Mammary epithelial cell (primary cell): ENCODE measurements at regions of chr4 and their contacts with region 1.

Region 1: GRCh38 chr4:151408630-151409469 is at the start of gene FHIP1A:
- DNase-seq: peak; percentile 95
- H3K4me3 ChIP-seq: peak within 1 kb of the TSS; percentile 82 to 97 (median 85)
- H3K27ac ChIP-seq: peak within 1 kb of the TSS; percentile 97
- H3K4me1 ChIP-seq: peaks cover 31% of the 10 kb centered on the region
- H3K27me3 ChIP-seq: no peaks in the 10 kb centered on the region
- CTCF ChIP-seq: peak in 1 of 2 donors; percentile 10
- total RNA-seq, gene FHIP1A: 33.0 to 38.5 TPM

Region 2: GRCh38 chr4:151468715-151469696 is 60.2 kb after region 1 on chr4:
- CTCF ChIA-PET with region 1: no interaction called
- dilution Hi-C with region 1: no loop called
- in situ Hi-C with region 1: no loop called
- intact Hi-C with region 1: loop called (anchors 2 kb)
- DNase-seq: peak; percentile 57
- H3K4me3 ChIP-seq: no peak overlapping the region
- H3K27ac ChIP-seq: no peak overlapping the region
- H3K4me1 ChIP-seq: peaks cover 22% of the 10 kb centered on the region
- H3K27me3 ChIP-seq: no peaks in the 10 kb centered on the region
- CTCF ChIP-seq: no peak

Region 3: GRCh38 chr4:151484396-151485102 is 75.7 kb after region 1 on chr4:
- CTCF ChIA-PET with region 1: no interaction called
- dilution Hi-C with region 1: no loop called
- in situ Hi-C with region 1: no loop called
- intact Hi-C with region 1: loop called (anchors 1 kb)
- DNase-seq: peak; percentile 73
- H3K4me3 ChIP-seq: no peak overlapping the region
- H3K27ac ChIP-seq: peak overlapping the region; percentile 79
- H3K4me1 ChIP-seq: peaks cover 25% of the 10 kb centered on the region
- H3K27me3 ChIP-seq: no peaks in the 10 kb centered on the region
- CTCF ChIP-seq: no peak

Region 4: GRCh38 chr4:151524610-151525009 is 115.8 kb after region 1 on chr4:
- CTCF ChIA-PET with region 1: no interaction called
- dilution Hi-C with region 1: no loop called
- in situ Hi-C with region 1: no loop called
- intact Hi-C with region 1: loop called (anchors 5 kb)
- DNase-seq: peak; percentile 81
- H3K4me3 ChIP-seq: no peak overlapping the region
- H3K27ac ChIP-seq: peak overlapping the region; percentile 64
- H3K4me1 ChIP-seq: peaks cover 18% of the 10 kb centered on the region
- H3K27me3 ChIP-seq: no peaks in the 10 kb centered on the region
- CTCF ChIP-seq: no peak

Region 5: GRCh38 chr4:151540728-151541422 is 132.0 kb after region 1 on chr4:
- CTCF ChIA-PET with region 1: no interaction called
- dilution Hi-C with region 1: no loop called
- in situ Hi-C with region 1: no loop called
- intact Hi-C with region 1: loop called (anchors 1 kb)
- DNase-seq: peak; percentile 99
- H3K4me3 ChIP-seq: peak overlapping the region; percentile 7 to 17 (median 12)
- H3K27ac ChIP-seq: peak overlapping the region; percentile 100
- H3K4me1 ChIP-seq: peaks cover 36% of the 10 kb centered on the region
- H3K27me3 ChIP-seq: no peaks in the 10 kb centered on the region
- CTCF ChIP-seq: no peak

Region 6: GRCh38 chr4:151604238-151604637 is 195.4 kb after region 1 on chr4:
- CTCF ChIA-PET with region 1: no interaction called
- dilution Hi-C with region 1: no loop called
- in situ Hi-C with region 1: no loop called
- intact Hi-C with region 1: loop called (anchors 2 kb)
- DNase-seq: no peak
- H3K4me3 ChIP-seq: no peak overlapping the region
- H3K27ac ChIP-seq: no peak overlapping the region
- H3K4me1 ChIP-seq: peaks cover 9% of the 10 kb centered on the region
- H3K27me3 ChIP-seq: no peaks in the 10 kb centered on the region
- CTCF ChIP-seq: peak; percentile 43 to 48

Region 7: DNA sequence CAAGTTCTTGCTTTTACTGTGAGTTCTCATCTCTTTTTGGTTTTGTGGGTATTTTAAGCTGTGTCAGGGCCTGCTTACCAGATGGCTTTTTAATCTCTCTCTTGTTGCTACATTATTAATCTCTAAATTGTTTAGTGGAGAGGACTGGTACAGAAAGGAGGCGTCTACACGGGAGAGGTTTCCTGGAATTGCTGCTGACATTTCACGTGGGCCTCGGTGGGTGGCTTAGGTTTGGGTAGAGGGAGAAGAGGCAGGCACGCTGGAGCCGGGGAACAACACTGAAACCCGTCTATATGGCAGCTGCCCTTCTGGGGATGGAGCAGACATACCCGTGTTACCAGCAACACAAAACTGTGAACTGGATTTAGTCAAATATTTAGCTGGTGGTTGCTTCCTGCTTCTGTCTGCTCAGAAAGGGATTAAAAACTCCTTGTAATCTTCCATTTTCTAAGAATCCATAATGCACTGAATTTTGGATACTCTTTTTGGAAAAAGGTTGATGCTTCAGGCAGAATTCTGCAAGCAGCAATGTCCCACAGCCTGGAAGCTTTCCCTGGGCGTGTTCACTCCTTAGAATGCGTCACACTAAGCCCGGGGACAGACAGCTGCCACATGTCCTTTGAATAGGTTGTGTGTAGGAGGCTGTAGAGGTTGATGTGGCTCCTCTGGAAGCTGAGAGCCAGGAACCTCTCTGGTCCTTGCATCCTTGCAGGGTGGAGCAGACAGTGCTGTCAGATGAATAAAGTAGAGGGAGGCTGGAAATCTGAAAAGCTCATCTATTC is 551.8 kb after region 1 on chr4:
- CTCF ChIA-PET with region 1: no interaction called
- dilution Hi-C with region 1: no loop called
- in situ Hi-C with region 1: no loop called
- intact Hi-C with region 1: no loop called
- DNase-seq: no peak
- H3K4me3 ChIP-seq: no peak overlapping the region
- H3K27ac ChIP-seq: no peak overlapping the region
- H3K4me1 ChIP-seq: no peaks in the 10 kb centered on the region
- H3K27me3 ChIP-seq: no peaks in the 10 kb centered on the region
- CTCF ChIP-seq: no peak